SK-N-SH (cell line): ENCODE measurements at regions of chr12 and their contacts with region 1.

Region 1: GRCh38 chr12:15563663-15564062 is 225.5 kb downstream of the EPS8 start:
- DNase-seq: no peak
- H3K4me3 ChIP-seq: no peak overlapping the region
- H3K27ac ChIP-seq: peak overlapping the region in 1 of 2 experiments; percentile 15; a peak in 1 of 4 replicates
- H3K4me1 ChIP-seq: no peaks in the 10 kb centered on the region
- H3K27me3 ChIP-seq: no peaks in the 10 kb centered on the region
- CTCF ChIP-seq: no peak
- EP300 ChIP-seq: no peak
- RAD21 ChIP-seq: no peak

Region 2: DNA sequence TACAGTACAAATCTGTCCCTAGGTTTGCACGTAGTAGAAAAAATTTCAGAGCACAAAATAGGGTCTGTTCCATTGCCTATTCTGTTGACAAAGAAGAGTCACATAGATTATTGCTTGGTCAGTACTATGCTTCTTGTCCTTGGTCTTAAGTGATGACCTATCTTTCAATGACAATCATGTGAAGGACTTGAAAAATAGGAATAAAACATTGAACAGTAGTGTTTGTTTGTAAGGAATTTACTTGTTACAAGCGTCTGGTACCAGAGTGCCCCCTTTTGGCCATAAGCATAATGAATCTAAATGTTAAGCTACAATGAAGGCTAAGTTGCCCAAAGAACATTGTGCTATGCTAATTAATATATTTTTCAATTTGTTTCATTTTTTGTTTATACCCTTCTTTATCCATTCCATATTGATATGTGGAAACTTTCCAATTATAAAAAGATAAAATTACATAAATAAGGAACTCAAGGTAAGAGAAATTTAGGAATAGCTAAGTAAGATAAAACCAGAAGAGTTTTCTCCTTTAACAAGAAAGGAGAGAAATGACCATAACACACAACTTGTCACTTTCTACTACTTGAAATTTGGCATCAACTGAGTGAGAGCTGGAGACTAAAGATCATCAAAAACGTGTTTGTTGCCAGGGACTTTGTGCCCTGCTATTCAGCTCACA is 20.8 kb after region 1 on chr12:
- CTCF ChIA-PET with region 1: interaction called, 13 read pairs
- POLR2A ChIA-PET with region 1: no interaction called
- DNase-seq: peak; percentile 5
- H3K4me3 ChIP-seq: no peak overlapping the region
- H3K27ac ChIP-seq: no peak overlapping the region
- H3K4me1 ChIP-seq: no peaks in the 10 kb centered on the region
- H3K27me3 ChIP-seq: no peaks in the 10 kb centered on the region
- CTCF ChIP-seq: peak; percentile 85
- EP300 ChIP-seq: no peak
- RAD21 ChIP-seq: peak; percentile 71

Region 3: DNA sequence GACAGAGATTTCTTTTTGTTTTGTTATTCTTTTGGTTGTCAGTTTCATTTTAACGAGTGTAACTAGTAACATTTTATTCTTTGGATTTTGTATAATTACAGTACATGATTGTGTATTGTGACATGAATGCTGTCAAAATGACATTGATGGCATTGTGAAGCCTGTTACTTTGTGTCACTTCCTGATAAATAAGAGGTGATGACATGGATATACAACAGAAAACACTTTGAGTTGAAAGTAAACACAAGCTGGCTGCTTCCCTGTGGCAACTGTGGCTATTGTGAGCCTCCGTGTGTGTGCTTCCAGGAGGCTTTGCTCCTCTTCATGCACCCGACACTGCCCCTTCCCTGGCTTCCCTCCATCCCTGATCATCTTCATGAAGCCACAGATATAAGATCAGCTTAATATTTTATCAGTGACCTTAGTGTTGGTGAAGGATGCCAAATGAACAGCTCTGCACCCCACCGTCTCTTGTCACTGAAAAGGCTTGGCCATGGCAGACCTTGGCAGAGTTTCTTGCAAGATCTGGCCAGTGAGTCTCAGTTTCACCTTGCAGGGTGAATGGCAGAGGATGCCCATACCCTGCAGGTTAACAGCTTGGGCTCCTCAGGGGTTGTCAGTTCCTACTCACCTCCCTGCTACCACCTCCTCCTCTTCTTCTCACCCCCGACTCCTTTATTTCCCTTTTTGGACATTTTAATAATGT is 33.6 kb after region 1 on chr12:
- CTCF ChIA-PET with region 1: no interaction called
- POLR2A ChIA-PET with region 1: no interaction called
- DNase-seq: no peak
- H3K4me3 ChIP-seq: no peak overlapping the region
- H3K27ac ChIP-seq: no peak overlapping the region
- H3K4me1 ChIP-seq: peaks cover 0 to 5% of the 10 kb centered on the region in 2 experiments; a peak in 1 of 4 replicates
- H3K27me3 ChIP-seq: no peaks in the 10 kb centered on the region
- CTCF ChIP-seq: no peak
- EP300 ChIP-seq: no peak
- RAD21 ChIP-seq: no peak